WTC11 (cell line): ENCODE measurements at regions of chr11 and their contacts with region 1.

Region 1: GRCh38 chr11:116835791-116836631 is 1.4 kb downstream of the APOA1 start:
- DNase-seq: peak; percentile 88
- ATAC-seq: peak; percentile 83
- H3K4me3 Mint-ChIP-seq: peak overlapping the region; percentile 59
- H3K27ac Mint-ChIP-seq: no peak overlapping the region
- H3K4me1 Mint-ChIP-seq: peaks cover 19% of the 10 kb centered on the region
- H3K27me3 Mint-ChIP-seq: peaks cover 11% of the 10 kb centered on the region
- CTCF ChIP-seq: peak; percentile 12; the same call in 1 of the 2 replicates

Region 2: GRCh38 chr11:116590844-116591570 is 245.0 kb before region 1 on chr11:
- CTCF ChIA-PET with region 1: no interaction called
- POLR2A ChIA-PET with region 1: no interaction called
- DNase-seq: no peak
- ATAC-seq: no peak
- H3K4me3 Mint-ChIP-seq: no peak overlapping the region
- H3K27ac Mint-ChIP-seq: no peak overlapping the region
- H3K4me1 Mint-ChIP-seq: peaks cover 13% of the 10 kb centered on the region
- H3K27me3 Mint-ChIP-seq: peaks cover 19% of the 10 kb centered on the region
- CTCF ChIP-seq: no peak

Region 3: DNA sequence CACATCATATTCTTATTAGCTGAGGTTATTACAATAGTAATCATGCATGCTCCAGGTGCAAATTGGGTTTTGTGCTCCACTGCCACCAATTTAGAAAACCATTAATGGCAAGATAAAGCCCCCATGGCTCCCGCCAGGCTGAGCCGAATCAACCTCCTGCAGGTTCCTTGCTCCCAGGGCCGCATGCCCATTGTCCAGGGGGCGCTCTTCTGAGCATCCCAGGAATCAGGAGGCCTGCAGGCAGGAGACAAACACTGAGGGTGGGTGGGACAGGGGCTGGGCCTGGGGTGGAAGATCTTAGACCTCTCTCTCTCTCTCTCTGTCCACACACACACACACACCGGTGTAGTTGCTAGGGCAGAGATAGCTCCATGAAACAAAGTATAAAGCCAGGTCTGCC is 120.6 kb before region 1 on chr11:
- CTCF ChIA-PET with region 1: no interaction called
- POLR2A ChIA-PET with region 1: no interaction called
- DNase-seq: peak; percentile 48
- ATAC-seq: peak; percentile 83
- H3K4me3 Mint-ChIP-seq: no peak overlapping the region
- H3K27ac Mint-ChIP-seq: no peak overlapping the region
- H3K4me1 Mint-ChIP-seq: peaks cover 15% of the 10 kb centered on the region
- H3K27me3 Mint-ChIP-seq: peaks cover 9% of the 10 kb centered on the region
- CTCF ChIP-seq: no peak

Region 4: DNA sequence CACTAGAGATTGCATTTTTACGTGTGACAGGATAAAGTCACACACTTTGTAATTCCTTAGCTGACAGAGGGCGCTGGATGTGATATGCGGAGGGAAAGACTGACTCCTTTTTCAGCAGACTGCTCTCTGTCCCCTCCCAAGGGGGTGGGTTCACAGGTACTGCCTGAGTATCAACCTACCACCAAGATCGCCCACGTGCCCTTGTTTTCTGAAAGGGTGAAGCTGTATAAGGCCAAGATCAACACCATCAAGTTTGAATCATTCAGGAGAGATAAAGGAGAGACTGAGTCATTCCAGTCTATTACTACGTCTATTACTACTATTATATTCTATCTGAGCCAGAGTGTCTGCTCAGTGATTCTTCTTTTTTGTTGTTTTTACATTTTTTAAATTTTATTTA is 93.9 kb before region 1 on chr11:
- CTCF ChIA-PET with region 1: interaction called, 16 read pairs
- POLR2A ChIA-PET with region 1: no interaction called
- DNase-seq: no peak
- ATAC-seq: peak; percentile 56
- H3K4me3 Mint-ChIP-seq: no peak overlapping the region
- H3K27ac Mint-ChIP-seq: peak overlapping the region; percentile 86
- H3K4me1 Mint-ChIP-seq: peaks cover 32% of the 10 kb centered on the region
- H3K27me3 Mint-ChIP-seq: no peaks in the 10 kb centered on the region
- CTCF ChIP-seq: no peak

Region 5: GRCh38 chr11:116821050-116821918 is 14.7 kb before region 1 on chr11:
- CTCF ChIA-PET with region 1: interaction called, 16 read pairs
- POLR2A ChIA-PET with region 1: no interaction called
- DNase-seq: no peak
- ATAC-seq: no peak
- H3K4me3 Mint-ChIP-seq: no peak overlapping the region
- H3K27ac Mint-ChIP-seq: no peak overlapping the region
- H3K4me1 Mint-ChIP-seq: no peaks in the 10 kb centered on the region
- H3K27me3 Mint-ChIP-seq: no peaks in the 10 kb centered on the region
- CTCF ChIP-seq: no peak

Region 6: DNA sequence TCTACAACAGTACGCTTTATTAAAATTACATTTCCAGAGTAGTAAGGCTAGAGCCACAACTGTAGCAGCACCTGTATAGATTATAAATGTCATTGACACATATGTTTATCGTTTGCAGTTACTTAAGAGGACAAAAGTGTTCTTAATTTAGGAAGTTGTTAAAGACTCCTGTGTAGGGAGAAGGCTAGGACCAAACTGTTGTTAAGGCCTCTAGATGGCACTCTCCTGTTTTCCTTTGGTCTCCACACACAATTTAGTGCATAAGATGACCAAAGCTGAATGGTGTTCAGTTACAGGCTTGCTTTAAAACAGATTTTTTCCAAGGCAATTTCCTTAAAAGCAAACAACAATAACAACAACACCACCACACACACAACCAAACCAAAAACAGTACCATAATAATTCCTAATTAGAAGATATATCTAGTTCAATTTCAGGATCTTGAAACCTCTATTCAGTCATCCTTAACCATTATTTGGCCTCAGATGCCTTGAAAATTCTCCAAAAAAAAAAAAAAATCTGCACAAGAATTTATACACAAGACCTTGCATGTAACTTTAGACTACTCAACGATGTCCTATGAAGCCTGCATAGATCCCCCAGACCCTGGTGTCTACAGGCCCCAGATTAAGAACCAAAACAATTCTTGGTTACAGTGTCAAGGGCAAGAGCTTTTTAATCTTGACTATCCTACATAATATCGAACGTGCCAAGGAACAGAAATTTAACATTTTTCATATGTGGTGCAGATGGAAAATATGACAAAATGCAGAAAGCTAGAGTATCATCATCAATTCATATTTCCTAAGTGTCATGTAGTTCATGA is 44.0 kb after region 1 on chr11:
- CTCF ChIA-PET with region 1: interaction called, 13 read pairs
- POLR2A ChIA-PET with region 1: no interaction called
- DNase-seq: no peak
- ATAC-seq: peak; percentile 85
- H3K4me3 Mint-ChIP-seq: no peak overlapping the region
- H3K27ac Mint-ChIP-seq: peak overlapping the region; percentile 11; the same call in 1 of the 2 replicates
- H3K4me1 Mint-ChIP-seq: peaks cover 3% of the 10 kb centered on the region; the same call in 1 of the 2 replicates
- H3K27me3 Mint-ChIP-seq: no peaks in the 10 kb centered on the region
- CTCF ChIP-seq: no peak

Region 7: DNA sequence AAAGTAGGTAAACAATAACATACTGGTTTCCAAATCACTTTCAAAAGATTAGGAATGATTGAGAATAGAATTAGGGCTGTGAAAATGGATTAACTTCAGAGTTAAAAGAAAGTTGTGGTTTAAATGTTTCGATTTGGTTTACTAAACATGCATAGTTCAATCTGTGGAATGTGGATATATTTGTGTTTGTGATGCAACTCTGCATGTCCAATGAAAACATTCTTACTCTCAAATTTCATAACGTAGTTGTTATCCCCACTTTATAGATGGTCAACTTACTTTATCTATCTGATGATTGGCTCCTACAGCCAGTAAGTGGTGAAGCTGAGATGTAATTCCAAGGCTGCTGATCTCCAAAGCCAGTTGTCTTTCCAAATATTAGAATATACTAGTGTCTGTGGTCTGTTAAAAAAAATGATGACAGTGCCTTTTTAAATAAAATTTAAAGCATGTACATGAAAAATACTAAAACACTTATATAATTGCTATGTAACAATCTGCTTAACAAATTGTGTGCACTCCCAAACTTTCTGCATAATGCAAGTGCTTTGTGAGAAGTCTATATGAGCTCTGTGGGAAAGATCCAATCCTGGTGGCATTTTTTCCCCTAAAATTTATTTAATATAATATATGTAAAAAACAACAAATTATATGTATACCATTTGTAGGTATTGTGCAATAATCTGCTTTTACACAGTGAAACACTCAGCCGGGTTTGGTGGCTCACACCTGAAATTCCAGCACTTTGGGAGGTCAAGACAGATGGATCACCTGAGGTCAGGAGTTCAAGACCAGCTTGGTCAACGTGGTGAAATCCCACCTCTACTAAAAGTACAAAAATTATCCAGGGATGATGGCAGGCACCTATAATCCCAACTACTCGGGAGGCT is 271.9 kb after region 1 on chr11:
- CTCF ChIA-PET with region 1: interaction called, 24 read pairs
- POLR2A ChIA-PET with region 1: no interaction called
- DNase-seq: no peak
- ATAC-seq: no peak
- H3K4me3 Mint-ChIP-seq: no peak overlapping the region
- H3K27ac Mint-ChIP-seq: no peak overlapping the region
- H3K4me1 Mint-ChIP-seq: no peaks in the 10 kb centered on the region
- H3K27me3 Mint-ChIP-seq: no peaks in the 10 kb centered on the region
- CTCF ChIP-seq: no peak

Region 8: DNA sequence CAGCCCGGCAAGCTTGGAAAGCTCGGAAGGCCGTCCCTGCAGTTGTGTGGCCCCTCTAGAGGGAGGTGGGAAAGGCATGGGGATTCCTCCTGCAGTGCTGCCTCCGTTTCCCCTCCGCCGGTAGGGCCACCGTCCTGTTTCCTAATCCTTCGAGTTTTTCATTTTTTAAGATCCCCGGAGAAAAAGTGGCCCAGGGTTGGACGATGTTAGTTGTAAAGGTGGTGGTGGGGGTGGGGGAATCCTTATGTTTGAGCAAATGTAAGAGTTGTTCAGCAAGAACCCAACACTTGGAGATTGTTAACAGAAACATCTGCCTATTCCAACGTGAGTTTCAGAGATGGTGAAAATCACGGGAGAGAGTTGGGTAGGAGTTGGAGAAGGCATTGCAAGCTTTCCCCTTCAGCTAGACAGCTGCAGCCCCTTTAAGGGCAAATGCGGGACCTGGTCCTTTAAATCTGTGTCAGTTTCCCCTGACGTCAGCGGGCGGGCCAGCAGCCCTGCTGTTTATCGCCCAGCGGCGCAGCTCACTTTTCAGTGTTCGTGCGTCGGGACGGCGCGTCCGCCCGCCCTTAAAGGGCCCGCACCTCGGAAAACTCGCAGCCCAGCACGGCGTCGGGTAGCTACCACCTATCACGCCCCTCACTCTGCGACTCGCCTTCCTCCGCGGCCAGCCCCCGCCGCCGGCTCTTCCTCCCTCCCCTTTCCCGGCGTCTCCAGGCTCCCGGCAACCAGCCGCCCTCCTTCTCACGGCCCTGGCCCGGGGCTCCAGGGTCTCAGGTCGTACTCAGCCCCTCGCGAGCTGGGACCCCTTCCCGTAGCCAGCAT is 342.4 kb after region 1 on chr11 and contains the start of gene SIDT2:
- CTCF ChIA-PET with region 1: interaction called, 15 read pairs
- POLR2A ChIA-PET with region 1: no interaction called
- DNase-seq: peak; percentile 94
- ATAC-seq: peak; percentile 87
- H3K4me3 Mint-ChIP-seq: peak within 1 kb of the TSS; percentile 92
- H3K27ac Mint-ChIP-seq: peak within 1 kb of the TSS; percentile 95
- H3K4me1 Mint-ChIP-seq: peaks cover 26% of the 10 kb centered on the region
- H3K27me3 Mint-ChIP-seq: peaks cover 6% of the 10 kb centered on the region
- CTCF ChIP-seq: no peak
- total RNA-seq, gene SIDT2: 20.7 to 27.6 TPM (median 20.9 TPM) in 3 replicates